PC-3 (cell line): ENCODE measurements at regions of chr6 and their contacts with region 1.

Region 1: GRCh38 chr6:11585426-11586016 is 48.0 kb downstream of the TMEM170B start:
- DNase-seq: peak; percentile 80
- ATAC-seq: peak; percentile 29; the same call in 1 of the 2 replicates
- H3K4me3 ChIP-seq: no peak overlapping the region
- H3K27ac ChIP-seq: no peak overlapping the region
- H3K4me1 ChIP-seq: peaks cover 11% of the 10 kb centered on the region
- H3K27me3 ChIP-seq: no peaks in the 10 kb centered on the region
- CTCF ChIP-seq: peak; percentile 83

Region 2: DNA sequence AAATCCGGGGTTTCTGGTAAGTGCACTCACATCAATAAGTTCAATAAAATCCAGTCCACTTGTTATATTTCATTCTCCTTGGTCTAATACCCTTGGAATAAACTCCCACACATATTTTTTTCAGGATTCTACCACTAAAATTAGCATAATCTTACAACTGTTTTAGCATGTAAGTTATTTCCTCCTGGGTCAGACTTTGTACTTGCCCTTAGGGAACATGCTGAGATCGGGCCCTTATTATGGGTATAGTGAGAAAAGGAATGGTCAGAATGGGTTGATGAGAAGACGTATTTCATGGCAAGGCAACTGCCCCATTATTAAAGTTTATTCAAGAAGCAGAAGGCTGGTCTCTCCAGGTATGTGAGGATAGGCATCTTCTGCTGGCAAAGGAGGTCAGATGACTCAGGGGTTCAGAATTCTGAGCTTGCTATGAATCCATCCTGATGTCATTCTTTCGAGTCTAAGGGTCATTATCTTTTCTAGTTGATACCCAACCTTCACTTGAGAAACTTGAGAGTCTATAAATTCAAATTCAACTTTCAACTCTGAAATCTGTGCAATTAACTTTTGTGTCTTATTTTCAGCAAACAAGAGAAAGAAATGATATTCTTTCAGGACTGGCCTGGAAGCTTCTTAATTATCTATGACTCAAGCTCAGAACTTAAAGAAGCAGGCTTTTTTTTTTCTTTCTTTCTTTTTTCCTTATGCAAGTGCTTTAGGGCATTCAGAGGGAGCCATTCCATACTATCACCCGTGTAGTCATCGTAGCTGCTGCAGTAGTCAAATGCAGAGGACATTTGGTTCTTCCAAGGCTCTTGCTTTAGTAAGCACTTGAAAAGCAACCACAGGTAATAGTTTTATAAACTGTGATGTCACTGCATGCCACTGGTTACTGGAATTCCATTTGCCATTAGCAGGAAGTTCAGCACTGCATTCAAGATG is 99.9 kb after region 1 on chr6:
- CTCF ChIA-PET with region 1: no interaction called
- POLR2A ChIA-PET with region 1: no interaction called
- intact Hi-C with region 1: loop called (anchors 10 kb)
- DNase-seq: peak; percentile 95
- ATAC-seq: peak; percentile 85
- H3K4me3 ChIP-seq: peak overlapping the region; percentile 17; the same call in 1 of the 2 replicates
- H3K27ac ChIP-seq: peak overlapping the region; percentile 65
- H3K4me1 ChIP-seq: peaks cover 47% of the 10 kb centered on the region
- H3K27me3 ChIP-seq: no peaks in the 10 kb centered on the region
- CTCF ChIP-seq: no peak

Region 3: DNA sequence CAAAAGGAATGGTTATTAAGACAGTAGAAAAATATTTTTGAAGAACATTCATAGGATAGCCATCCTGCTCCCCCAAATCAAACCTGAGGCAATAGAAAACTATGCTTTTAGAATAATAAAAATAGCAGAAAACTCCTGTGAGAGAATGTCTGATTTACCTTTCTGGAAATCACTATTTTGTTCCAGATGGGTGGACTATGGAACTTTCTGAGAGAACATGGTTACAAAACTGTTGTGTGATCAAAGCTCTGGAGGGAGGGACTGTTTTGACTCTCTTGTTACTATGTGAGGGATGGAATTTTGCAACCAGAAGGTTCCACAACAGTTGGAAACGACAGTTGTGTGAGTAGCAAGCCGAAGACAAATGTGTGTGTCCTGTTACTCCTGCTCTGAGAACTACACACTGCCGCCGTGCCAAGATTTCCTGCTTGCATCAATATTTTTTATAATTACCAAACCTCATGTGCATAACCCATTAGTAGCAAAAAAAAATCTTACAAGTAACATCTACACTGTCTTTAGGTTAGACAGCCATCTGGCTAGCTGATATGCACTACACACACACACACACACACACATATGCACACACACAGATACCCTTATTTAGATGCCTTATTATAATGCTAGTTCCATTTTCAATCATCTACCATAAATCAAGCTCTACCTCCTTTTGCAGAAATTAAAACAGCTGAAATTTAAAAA is 415.6 kb after region 1 on chr6:
- CTCF ChIA-PET with region 1: no interaction called
- POLR2A ChIA-PET with region 1: no interaction called
- intact Hi-C with region 1: no loop called
- DNase-seq: no peak
- ATAC-seq: no peak
- H3K4me3 ChIP-seq: no peak overlapping the region
- H3K27ac ChIP-seq: no peak overlapping the region
- H3K4me1 ChIP-seq: no peaks in the 10 kb centered on the region
- H3K27me3 ChIP-seq: no peaks in the 10 kb centered on the region
- CTCF ChIP-seq: no peak

Region 4: GRCh38 chr6:12890171-12890790 is 1304.8 kb after region 1 on chr6:
- CTCF ChIA-PET with region 1: no interaction called
- POLR2A ChIA-PET with region 1: no interaction called
- intact Hi-C with region 1: loop called (anchors 10 kb)
- DNase-seq: peak; percentile 40
- ATAC-seq: no peak
- H3K4me3 ChIP-seq: no peak overlapping the region
- H3K27ac ChIP-seq: no peak overlapping the region
- H3K4me1 ChIP-seq: no peaks in the 10 kb centered on the region
- H3K27me3 ChIP-seq: peaks cover 29% of the 10 kb centered on the region
- CTCF ChIP-seq: peak; percentile 69